Right cardiac atrium (tissue), 5 donors: ENCODE measurements at regions of chr6 and their contacts with region 1.

Region 1: DNA sequence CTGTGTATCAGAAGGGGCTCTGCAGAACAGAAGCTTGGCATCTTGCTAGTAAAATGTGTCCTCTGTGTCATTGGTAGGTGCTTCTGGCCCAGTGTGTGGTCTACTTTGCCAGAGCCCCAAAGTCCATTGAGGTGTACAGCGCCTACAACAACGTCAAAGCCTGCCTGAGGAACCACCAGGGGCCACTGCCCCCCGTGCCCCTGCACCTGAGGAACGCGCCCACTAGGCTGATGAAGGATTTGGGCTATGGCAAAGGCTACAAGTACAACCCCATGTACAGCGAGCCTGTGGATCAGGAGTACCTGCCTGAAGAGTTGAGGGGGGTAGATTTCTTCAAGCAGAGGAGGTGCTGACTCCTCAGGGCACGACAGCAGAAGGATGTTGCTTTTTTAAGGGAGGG is 19.7 kb downstream of the WRNIP1 start:
- DNase-seq: no peak
- ATAC-seq: no peak
- H3K4me3 ChIP-seq: no peak overlapping the region
- H3K27ac ChIP-seq: no peak overlapping the region
- H3K4me1 ChIP-seq: peaks cover 2% of the 10 kb centered on the region
- H3K27me3 ChIP-seq: no peaks in the 10 kb centered on the region

Region 2: GRCh38 chr6:3063733-3064700 is 279.1 kb after region 1 on chr6:
- intact Hi-C with region 1: loop called in 1 of 4 experiments (anchors 5 kb)
- DNase-seq: peak; percentile 98 to 99 (median 99)
- ATAC-seq: peak; percentile 96
- H3K4me3 ChIP-seq: peak overlapping the region; percentile 82
- H3K27ac ChIP-seq: peak overlapping the region; percentile 99
- H3K4me1 ChIP-seq: no peaks in the 10 kb centered on the region
- H3K27me3 ChIP-seq: no peaks in the 10 kb centered on the region

Region 3: DNA sequence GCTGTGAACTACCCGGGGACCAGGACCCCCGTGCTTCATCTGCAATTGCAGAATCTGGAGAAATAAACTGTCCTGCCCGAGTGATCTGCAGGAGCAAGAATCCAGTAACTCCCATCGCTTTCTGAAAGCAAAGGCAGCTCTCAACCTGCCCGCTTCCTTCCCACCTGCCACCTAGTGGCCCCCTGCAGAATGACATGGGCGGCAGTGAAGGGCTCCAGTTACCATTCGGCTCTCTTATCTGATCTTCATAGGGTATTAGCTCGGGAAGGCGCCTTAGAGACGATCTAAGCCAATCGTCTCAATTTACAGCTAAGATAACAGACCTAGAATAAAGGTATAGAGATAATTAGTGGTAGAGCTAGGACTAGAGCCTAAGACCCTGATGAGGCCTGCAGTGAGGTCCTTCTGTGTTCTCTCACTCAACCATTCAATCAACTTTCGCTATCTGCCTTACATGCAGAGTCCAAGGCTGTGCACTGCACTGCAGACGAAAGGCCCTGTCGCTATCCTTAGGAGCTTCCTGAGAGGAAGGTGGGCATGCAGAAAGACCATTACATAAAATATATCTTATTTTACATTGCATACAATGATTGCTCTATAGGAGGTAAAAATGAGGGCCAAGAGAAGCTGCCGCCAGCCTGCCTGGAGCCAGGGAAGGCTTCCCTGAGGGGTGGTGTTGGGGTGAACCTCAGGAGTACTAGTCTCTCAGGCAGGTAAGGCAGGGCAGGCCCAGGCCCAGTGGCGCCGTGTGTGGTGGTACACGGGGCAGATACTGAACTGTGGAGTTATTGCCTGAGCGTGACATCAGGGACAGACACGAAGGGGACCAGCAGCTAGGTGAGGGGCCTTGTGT is 466.8 kb after region 1 on chr6:
- intact Hi-C with region 1: no loop called
- DNase-seq: peak; percentile 74 to 91 (median 90)
- ATAC-seq: peak; percentile 81 to 82
- H3K4me3 ChIP-seq: no peak overlapping the region
- H3K27ac ChIP-seq: no peak overlapping the region
- H3K4me1 ChIP-seq: peaks cover 3% of the 10 kb centered on the region
- H3K27me3 ChIP-seq: no peaks in the 10 kb centered on the region